Activated CD8-positive, alpha-beta T cell treated with anti-CD3 and anti-CD28 coated beads for 36 hours (primary cell): ENCODE measurements at regions of chr15 and their contacts with region 1.

Region 1: DNA sequence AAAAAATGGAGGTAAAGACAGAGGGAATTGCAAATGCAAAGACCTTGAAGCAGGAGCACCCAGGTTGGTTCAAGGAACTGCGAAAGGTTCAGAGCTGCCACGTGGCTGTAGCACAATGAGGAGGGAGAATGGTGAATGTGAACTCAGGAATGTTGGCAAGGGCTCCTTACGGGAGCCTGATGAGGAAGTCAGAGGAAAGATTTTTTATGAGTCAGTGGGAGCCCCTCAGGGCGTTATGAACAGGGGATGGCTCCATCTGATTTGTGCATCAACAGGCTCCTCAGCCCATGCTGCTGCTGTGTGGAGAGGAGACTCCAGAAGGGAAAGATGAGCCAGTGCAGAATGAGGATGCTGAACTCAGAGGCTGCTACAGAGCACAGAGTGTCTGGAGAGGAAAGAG is 194.4 kb downstream of the ARRDC4 start:
- DNase-seq: no peak
- ATAC-seq: no peak
- H3K4me3 Mint-ChIP-seq: no peak overlapping the region
- H3K27ac Mint-ChIP-seq: no peak overlapping the region
- H3K4me1 Mint-ChIP-seq: no peaks in the 10 kb centered on the region
- H3K27me3 Mint-ChIP-seq: peaks cover 3% of the 10 kb centered on the region
- CTCF ChIP-seq: no peak

Region 2: GRCh38 chr15:97968380-97968779 is 186.5 kb before region 1 on chr15:
- CTCF ChIA-PET with region 1: no interaction called
- POLR2A ChIA-PET with region 1: no interaction called
- intact Hi-C with region 1: no loop called
- DNase-seq: no peak
- ATAC-seq: no peak
- H3K4me3 Mint-ChIP-seq: no peak overlapping the region
- H3K27ac Mint-ChIP-seq: no peak overlapping the region
- H3K4me1 Mint-ChIP-seq: no peaks in the 10 kb centered on the region
- H3K27me3 Mint-ChIP-seq: no peaks in the 10 kb centered on the region
- CTCF ChIP-seq: no peak

Region 3: DNA sequence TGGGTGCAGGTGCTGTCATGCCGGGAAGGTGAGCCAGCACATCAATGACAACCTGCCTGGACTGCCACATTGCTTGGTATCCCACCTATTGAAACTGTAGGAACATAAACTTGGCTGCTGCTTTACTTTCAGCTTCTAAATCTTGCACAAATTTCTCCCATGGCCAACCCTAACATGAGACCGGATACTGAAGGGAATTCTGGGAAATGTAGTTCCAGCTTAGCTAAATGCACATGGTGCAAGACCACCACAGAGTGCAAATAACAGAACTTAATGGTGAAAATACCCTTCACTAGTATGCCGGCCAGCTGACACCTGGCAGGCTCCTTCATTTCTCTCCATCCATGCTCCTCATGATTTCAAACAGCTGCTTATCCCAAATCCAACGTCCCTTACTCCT is 53.1 kb after region 1 on chr15:
- CTCF ChIA-PET with region 1: no interaction called
- POLR2A ChIA-PET with region 1: no interaction called
- intact Hi-C with region 1: loop called (anchors 5 kb)
- DNase-seq: no peak
- ATAC-seq: no peak
- H3K4me3 Mint-ChIP-seq: no peak overlapping the region
- H3K27ac Mint-ChIP-seq: no peak overlapping the region
- H3K4me1 Mint-ChIP-seq: no peaks in the 10 kb centered on the region
- H3K27me3 Mint-ChIP-seq: peaks cover 2% of the 10 kb centered on the region
- CTCF ChIP-seq: no peak